Heart left ventricle (tissue), 16 donors: ENCODE measurements at regions of chr1 and their contacts with region 1.

Region 1: DNA sequence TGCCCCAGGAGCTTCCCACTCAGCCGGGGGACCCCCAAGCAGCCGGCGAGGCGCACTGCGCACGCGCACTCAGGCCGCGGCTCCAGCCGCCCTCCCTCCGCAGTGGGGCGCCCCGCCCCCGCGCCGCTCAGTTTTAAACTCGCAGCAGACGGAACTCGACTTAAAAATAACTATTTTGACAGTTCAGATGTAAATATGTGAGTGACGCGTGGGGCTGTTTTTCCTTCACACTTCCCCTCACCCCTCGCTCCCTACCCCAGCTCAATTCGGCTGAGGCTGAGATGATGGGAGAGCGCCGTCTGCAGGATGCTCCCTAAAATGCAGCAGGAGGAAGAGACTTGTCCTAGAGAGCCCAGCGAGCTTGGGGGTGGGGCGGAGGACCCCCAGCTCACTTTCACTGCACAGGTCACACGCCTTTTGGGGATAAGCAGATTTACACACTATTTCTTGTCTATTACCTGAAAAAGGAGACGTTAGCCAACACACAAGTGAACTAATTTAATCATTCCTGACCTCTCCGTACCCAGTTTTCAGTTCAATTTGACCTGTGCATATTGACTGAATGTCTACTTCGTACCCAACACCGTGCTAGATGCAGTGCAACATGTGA is 8.9 kb upstream of the LEMD1 start:
- DNase-seq: peak in 4 of 5 donors; percentile 42 to 63 (median 56)
- ATAC-seq: peak; percentile 63 to 86 (median 74)
- H3K4me3 ChIP-seq: peak overlapping the region in 11 of 12 donors; percentile 28 to 65 (median 55)
- H3K27ac ChIP-seq: no peak overlapping the region
- H3K4me1 ChIP-seq: peaks cover 0 to 12% (median 4%) of the 10 kb centered on the region in 12 donors
- H3K27me3 ChIP-seq: no peaks in the 10 kb centered on the region
- CTCF ChIP-seq: peak; percentile 66 to 89 (median 78)
- POLR2A ChIP-seq: no peak

Region 2: GRCh38 chr1:205255941-205256780 is 174.6 kb before region 1 on chr1:
- intact Hi-C with region 1: no loop called
- DNase-seq: peak; percentile 88 to 92 (median 91)
- ATAC-seq: peak; percentile 91 to 93 (median 92)
- H3K4me3 ChIP-seq: no peak overlapping the region
- H3K27ac ChIP-seq: peak overlapping the region in 6 of 12 donors; percentile 6 to 43 (median 35)
- H3K4me1 ChIP-seq: peaks cover 2 to 54% (median 35%) of the 10 kb centered on the region in 12 donors
- H3K27me3 ChIP-seq: no peaks in the 10 kb centered on the region
- CTCF ChIP-seq: peak; percentile 92 to 99 (median 96)
- POLR2A ChIP-seq: no peak

Region 3: GRCh38 chr1:205354259-205354904 is 76.4 kb before region 1 on chr1:
- intact Hi-C with region 1: loop called in 2 of 10 experiments (anchors 5 to 10 kb)
- DNase-seq: peak in 3 of 5 donors; percentile 45 to 59 (median 54)
- ATAC-seq: peak in 2 of 4 donors; percentile 52 to 67
- H3K4me3 ChIP-seq: no peak overlapping the region
- H3K27ac ChIP-seq: no peak overlapping the region
- H3K4me1 ChIP-seq: peaks cover 0 to 15% (median 0%) of the 10 kb centered on the region in 12 donors
- H3K27me3 ChIP-seq: peaks cover 0 to 16% (median 8%) of the 10 kb centered on the region in 9 donors
- CTCF ChIP-seq: peak; percentile 70 to 92 (median 82)
- POLR2A ChIP-seq: no peak

Region 4: GRCh38 chr1:205528887-205529825 is 98.4 kb after region 1 on chr1:
- intact Hi-C with region 1: no loop called
- DNase-seq: peak; percentile 77 to 90 (median 82)
- ATAC-seq: peak; percentile 31 to 75 (median 60)
- H3K4me3 ChIP-seq: peak overlapping the region in 9 of 12 donors; percentile 21 to 50 (median 46)
- H3K27ac ChIP-seq: peak overlapping the region in 2 of 12 donors; percentile 36 to 53
- H3K4me1 ChIP-seq: peaks cover 0 to 34% (median 18%) of the 10 kb centered on the region in 12 donors
- H3K27me3 ChIP-seq: no peaks in the 10 kb centered on the region
- CTCF ChIP-seq: peak; percentile 90 to 98 (median 94)
- POLR2A ChIP-seq: no peak

Region 5: GRCh38 chr1:205588636-205589035 is 157.8 kb after region 1 on chr1:
- intact Hi-C with region 1: no loop called
- DNase-seq: no peak
- ATAC-seq: no peak
- H3K4me3 ChIP-seq: no peak overlapping the region
- H3K27ac ChIP-seq: no peak overlapping the region
- H3K4me1 ChIP-seq: peaks cover 0 to 22% (median 10%) of the 10 kb centered on the region in 12 donors
- H3K27me3 ChIP-seq: no peaks in the 10 kb centered on the region
- CTCF ChIP-seq: peak in 7 of 12 donors; percentile 13 to 40 (median 30)
- POLR2A ChIP-seq: no peak